OCI-LY7 (cell line): ENCODE measurements at regions of chr2 and their contacts with region 1.

Region 1: DNA sequence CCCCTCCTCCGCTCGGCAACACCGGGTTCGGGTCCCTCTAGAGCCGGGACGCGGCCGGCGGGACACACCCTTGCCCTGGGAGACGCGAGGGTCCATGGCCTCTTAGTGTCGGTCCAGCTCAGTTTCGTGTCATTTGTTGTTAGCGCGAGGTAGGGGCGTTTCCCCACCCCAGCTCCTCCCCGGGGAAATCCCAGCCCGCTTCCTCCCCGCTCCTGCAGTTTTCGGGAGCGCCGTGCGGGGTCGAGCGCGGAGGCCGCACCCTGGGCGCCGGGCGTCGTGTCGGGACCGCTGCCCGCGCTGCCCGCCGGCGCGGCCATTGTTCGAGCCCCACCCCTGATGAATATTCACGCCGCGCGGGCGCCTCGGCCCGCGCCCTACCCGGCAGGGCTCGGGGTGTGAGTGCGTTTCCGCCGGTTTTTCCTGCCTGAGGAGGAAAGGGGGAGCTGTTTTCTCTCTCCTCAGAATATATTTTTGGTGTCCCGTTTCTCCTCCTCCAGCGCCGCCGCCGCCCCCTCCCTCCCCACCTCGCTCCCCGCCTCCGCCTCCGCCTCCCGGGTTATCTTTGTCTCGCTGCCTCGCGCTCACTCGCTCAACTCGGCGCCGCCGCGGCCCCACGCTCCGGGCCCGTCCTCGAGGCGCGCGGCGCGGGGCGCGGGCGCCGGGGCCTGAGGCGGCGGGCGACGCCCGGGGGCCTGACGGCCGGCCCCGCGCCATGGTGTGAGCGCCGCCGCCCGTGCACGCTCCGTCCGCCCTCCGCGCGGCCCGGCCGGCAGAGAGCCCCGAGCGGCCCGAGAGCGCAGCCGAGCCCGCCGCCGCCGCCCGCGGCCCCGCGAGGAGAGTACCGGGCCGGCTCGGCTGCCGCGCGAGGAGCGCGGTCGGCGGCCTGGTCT is at the start of gene MAP4K4:
- DNase-seq: peak; percentile 87
- H3K4me3 ChIP-seq: peak within 1 kb of the TSS; percentile 93
- H3K27ac ChIP-seq: peak within 1 kb of the TSS; percentile 78
- H3K4me1 ChIP-seq: peaks cover 26% of the 10 kb centered on the region
- CTCF ChIP-seq: peak; percentile 31; the same call in 1 of the 2 replicates
- total RNA-seq, gene MAP4K4: 67.2 and 74.0 TPM in 2 replicates

Region 2: DNA sequence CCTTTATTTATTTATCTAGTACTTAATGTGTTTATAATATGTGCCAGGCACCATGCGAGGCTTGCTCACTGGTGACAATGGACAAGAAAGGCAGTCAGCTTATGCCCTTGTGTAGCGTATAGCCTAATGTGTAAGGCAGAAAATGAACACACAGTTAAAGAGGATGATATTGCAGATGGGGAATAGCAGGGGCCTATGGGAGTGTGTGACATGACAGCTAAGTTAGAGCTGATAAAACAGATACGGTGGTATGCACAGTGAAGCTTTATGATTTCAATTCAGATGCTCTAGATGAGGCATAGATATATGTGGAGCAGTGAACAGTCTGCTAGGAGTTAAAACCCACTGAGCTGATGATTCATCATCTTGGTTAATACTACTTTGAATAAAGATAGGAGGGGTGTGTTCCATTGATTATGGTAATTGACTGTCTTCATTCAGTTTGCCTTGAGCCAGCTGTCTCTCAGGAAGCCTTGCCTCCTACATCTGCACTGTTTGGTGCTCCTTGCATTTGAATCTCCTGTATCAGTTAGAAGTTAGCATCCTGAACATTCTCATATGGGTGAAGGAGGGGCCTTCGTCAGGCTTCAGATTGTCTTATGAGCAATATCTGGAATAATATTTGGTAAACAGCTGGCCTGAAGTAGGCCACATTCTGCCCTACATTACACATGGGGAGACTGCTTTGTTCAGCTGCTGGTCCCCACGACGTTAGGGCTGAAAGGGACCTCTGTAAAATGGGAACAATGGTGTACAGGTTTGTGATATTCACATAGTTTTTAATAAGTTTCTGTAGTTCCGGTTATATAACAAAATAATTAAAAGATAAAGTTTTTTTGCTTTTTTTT is 13.3 kb after region 1 on chr2:
- CTCF ChIA-PET with region 1: no interaction called
- POLR2A ChIA-PET with region 1: interaction called, 15 read pairs
- intact Hi-C with region 1: no loop called
- DNase-seq: no peak
- H3K4me3 ChIP-seq: peak overlapping the region; percentile 56
- H3K27ac ChIP-seq: peak overlapping the region; percentile 82
- H3K4me1 ChIP-seq: peaks cover 96% of the 10 kb centered on the region
- CTCF ChIP-seq: no peak

Region 3: DNA sequence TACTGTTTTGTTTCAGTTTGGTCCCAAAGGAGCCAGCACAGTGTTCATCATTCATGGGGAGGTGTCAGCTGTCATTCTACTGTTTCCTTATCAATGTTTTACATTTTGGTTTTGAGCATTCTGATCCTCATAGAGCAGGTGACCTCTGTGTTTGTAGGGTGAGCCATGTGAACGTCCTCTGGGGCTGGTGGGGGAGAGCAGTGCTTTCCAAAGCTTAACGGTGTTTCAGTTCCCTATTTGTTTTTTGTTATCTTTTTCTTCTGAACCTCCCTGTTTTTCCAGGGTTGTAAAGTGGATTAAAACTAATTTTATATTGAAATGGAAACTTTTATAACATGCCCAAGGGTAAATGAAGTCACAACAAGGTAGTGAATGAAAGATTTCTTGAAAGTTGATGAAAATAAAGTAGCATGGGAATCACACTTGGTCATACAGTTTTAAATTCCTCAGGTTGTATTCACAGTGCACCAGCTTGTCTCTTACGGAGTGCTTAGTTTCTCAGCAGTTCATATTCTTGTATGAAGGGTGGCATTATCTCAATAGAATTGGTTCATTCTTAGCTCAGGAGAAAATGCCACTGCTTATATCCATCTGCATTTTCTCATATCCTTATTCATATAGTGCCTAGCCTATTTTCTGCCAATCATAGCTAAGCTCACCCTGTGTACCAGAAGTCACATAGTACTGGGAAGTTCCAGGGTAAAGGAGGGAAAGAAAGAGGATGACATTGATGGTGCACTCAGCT is 54.7 kb after region 1 on chr2:
- CTCF ChIA-PET with region 1: no interaction called
- POLR2A ChIA-PET with region 1: interaction called, 5 read pairs
- intact Hi-C with region 1: loop called (anchors 2 kb)
- DNase-seq: peak; percentile 78
- H3K4me3 ChIP-seq: peak overlapping the region; percentile 54
- H3K27ac ChIP-seq: peak overlapping the region; percentile 91
- H3K4me1 ChIP-seq: peaks cover 66% of the 10 kb centered on the region
- CTCF ChIP-seq: no peak

Region 4: DNA sequence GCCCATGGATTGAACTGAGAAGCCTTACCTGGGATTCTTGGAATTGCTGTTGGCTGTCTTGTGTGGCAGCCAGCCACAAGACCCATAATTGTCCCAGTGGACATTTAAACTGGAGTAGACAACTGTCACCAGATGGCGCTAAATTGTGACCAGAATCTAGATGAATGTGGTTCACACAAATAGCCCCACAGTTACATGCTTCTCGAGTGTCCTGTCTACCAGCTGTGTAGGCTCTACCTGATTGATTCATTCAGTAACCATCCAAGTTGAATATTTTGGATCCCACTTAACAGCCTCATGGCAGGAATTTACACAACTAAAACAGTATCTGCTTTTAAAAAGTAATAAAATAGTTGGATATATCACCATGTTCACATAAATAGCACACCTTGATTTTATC is 73.4 kb after region 1 on chr2:
- CTCF ChIA-PET with region 1: interaction called, 3 read pairs
- POLR2A ChIA-PET with region 1: interaction called, 10 read pairs
- intact Hi-C with region 1: no loop called
- DNase-seq: peak; percentile 68
- H3K4me3 ChIP-seq: no peak overlapping the region
- H3K27ac ChIP-seq: no peak overlapping the region
- H3K4me1 ChIP-seq: peaks cover 53% of the 10 kb centered on the region
- CTCF ChIP-seq: peak; percentile 87